Upper lobe of right lung (tissue), 1 donor: ENCODE measurements at regions of chr16 and their contacts with region 1.

Region 1: DNA sequence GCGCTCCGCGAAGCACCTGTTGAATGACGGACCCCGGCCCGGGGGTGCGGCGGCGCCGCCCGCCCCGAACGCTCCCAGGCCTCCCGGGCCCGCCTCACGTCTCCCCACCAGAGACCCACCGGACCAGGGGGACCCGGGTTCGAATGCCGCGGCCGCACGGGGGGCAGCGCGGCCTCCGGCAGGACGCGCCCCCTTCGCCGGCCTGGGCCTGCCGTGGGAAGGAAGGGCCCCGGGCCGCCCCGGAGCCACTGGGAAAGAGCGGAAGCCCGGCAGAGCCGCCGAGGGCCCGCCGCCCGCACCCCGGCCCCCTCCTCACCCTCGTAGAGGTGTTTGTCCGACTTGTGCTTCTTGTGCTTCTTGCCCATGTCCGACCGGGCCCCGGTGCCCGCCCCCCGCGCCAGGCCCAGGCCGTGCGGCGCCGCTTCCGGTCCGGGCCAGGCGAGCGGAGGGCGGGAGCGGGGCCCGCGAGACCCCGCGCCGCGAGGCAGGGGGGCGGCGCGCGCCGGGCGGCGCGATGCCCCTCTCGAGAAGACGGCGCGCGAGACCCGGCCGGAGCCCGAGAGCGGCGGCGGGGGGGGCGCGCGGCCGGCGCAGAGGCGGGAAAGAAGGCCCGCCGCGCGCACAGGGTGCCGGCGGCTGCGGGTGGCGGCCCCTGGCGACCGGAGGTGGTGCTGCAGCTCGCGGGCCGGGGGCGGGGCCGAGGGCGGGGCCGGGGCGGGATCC is at the start of gene BRD7:
- DNase-seq: peak; percentile 85
- ATAC-seq: peak; percentile 97
- H3K4me3 ChIP-seq: peak within 1 kb of the TSS; percentile 89
- H3K27ac ChIP-seq: peak within 1 kb of the TSS; percentile 80
- H3K4me1 ChIP-seq: peaks cover 30% of the 10 kb centered on the region
- H3K27me3 ChIP-seq: no peaks in the 10 kb centered on the region
- CTCF ChIP-seq: peak; percentile 36
- total RNA-seq, gene BRD7: 62.9 TPM

Region 2: DNA sequence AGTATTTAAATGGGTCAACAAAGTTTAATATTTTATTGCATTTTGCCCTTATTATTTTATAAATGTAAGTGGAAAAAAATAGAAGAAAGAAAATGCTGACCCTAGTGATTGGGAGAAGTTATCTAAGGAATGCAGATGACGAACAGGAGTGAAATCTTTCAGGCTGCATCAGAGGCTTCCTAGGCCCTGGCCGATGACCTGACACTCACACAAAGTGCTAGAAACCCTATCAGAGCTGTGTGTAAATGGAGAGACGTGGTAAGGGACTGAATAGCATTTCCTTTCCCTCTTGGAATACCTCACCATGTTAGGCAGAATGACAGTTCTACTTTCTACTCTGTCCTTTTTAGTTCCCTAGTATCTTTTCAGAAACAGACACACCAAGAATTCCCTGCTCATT is 388.4 kb before region 1 on chr16:
- intact Hi-C with region 1: no loop called
- DNase-seq: no peak
- ATAC-seq: no peak
- H3K4me3 ChIP-seq: no peak overlapping the region
- H3K27ac ChIP-seq: no peak overlapping the region
- H3K4me1 ChIP-seq: no peaks in the 10 kb centered on the region
- H3K27me3 ChIP-seq: no peaks in the 10 kb centered on the region
- CTCF ChIP-seq: no peak

Region 3: DNA sequence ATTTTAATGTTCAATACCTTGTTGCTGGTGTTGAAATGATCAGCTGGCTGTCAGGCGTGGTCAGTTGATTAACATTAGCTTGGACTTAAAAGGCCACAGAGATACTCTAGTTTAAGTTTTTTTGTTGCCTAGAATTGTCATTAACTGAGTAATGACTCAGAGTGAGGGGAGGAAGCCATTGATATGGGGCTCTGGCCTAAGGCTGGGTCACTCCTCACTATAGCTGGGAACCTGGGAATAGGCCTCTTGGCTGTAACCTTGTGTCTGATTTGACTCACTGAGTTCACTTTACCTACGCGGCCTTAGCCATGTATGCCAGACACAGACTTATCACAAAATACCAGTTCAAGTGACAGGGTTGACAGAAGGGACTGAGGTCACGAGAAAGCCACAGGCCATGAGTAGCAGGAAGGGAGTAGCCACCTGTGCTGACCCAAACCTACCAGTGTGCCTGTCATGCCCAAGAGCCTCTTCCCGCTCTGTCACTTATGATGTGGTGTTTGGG is 140.2 kb before region 1 on chr16:
- intact Hi-C with region 1: loop called (anchors 10 kb)
- DNase-seq: no peak
- ATAC-seq: no peak
- H3K4me3 ChIP-seq: no peak overlapping the region
- H3K27ac ChIP-seq: no peak overlapping the region
- H3K4me1 ChIP-seq: no peaks in the 10 kb centered on the region
- H3K27me3 ChIP-seq: no peaks in the 10 kb centered on the region
- CTCF ChIP-seq: no peak

Region 4: GRCh38 chr16:50428116-50428515 is 59.5 kb after region 1 on chr16:
- intact Hi-C with region 1: no loop called
- DNase-seq: no peak
- ATAC-seq: no peak
- H3K4me3 ChIP-seq: no peak overlapping the region
- H3K27ac ChIP-seq: no peak overlapping the region
- H3K4me1 ChIP-seq: no peaks in the 10 kb centered on the region
- H3K27me3 ChIP-seq: peaks cover 6% of the 10 kb centered on the region
- CTCF ChIP-seq: no peak

Region 5: GRCh38 chr16:50665128-50665878 is 296.7 kb after region 1 on chr16:
- intact Hi-C with region 1: loop called (anchors 10 kb)
- DNase-seq: peak; percentile 88
- ATAC-seq: peak; percentile 86
- H3K4me3 ChIP-seq: peak overlapping the region; percentile 59
- H3K27ac ChIP-seq: peak overlapping the region; percentile 79
- H3K4me1 ChIP-seq: peaks cover 8% of the 10 kb centered on the region
- H3K27me3 ChIP-seq: no peaks in the 10 kb centered on the region
- CTCF ChIP-seq: peak; percentile 90